Heart left ventricle (tissue), 16 donors: ENCODE measurements at regions of chr20 and their contacts with region 1.

Region 1: DNA sequence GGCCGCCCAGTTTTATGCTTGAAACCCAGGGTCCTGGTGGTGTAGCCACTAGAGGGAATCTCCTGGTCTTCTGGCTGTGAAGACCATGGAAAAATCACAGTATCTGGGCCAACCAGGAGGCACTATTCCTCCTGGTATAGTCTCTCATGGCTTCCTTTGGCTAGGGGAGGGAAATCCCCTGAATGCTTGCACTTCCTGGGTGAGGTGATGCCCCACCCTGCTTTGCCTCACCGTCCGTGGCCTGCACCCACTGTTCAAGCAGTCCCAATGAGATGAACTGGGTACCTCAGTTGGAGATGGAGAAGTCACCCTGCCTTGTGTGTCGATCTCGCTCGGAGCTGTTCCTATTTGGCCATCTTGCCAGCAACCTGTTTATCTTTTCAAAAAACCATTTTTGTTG is 10.1 kb upstream of the ZNF337 start:
- DNase-seq: no peak
- ATAC-seq: no peak
- H3K4me3 ChIP-seq: no peak overlapping the region
- H3K27ac ChIP-seq: no peak overlapping the region
- H3K4me1 ChIP-seq: no peaks in the 10 kb centered on the region
- H3K27me3 ChIP-seq: no peaks in the 10 kb centered on the region
- CTCF ChIP-seq: no peak
- POLR2A ChIP-seq: no peak

Region 2: GRCh38 chr20:25659999-25660398 is 46.8 kb before region 1 on chr20:
- intact Hi-C with region 1: loop called in 1 of 10 experiments (anchors 10 kb)
- DNase-seq: no peak
- ATAC-seq: no peak
- H3K4me3 ChIP-seq: no peak overlapping the region
- H3K27ac ChIP-seq: no peak overlapping the region
- H3K4me1 ChIP-seq: no peaks in the 10 kb centered on the region
- H3K27me3 ChIP-seq: no peaks in the 10 kb centered on the region
- CTCF ChIP-seq: no peak
- POLR2A ChIP-seq: no peak